Thyroid gland (tissue), 4 donors: ENCODE measurements at regions of chr7 and their contacts with region 1.

Region 1: DNA sequence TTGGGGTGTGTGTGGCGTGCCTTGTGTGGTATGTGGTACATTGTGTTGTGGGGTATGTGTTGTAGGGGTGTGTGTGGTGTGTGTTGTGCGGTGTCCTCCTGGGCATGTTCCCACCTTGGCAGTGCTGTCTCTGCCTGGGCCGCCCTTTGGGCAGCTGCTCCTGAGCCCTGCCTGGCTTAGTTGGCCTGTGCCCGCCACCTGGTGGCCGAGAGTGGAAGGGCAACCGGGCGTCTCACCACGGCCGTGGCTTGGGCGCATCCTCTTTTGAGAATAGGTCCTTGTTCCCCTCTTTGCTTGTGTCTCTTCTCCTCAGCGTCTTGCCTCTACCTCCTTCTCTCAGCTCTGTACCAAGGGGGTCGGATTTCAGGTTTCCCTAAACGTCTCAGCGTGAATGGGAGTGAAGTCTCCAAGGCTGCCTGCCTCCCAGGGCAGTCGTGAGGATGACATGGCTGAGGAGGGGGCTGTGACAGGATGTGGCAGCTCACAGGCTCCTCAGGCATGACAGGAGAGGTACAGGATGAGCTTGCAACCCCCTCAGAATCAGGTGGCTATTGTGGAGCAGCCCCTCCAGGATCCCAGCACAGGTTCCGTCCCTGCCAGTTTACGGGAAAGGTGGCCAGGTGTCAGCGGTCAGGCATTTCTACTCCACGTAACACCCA is 98.4 kb upstream of the PODXL start:
- DNase-seq: peak; percentile 84 to 87
- H3K4me3 ChIP-seq: no peak overlapping the region
- H3K27ac ChIP-seq: no peak overlapping the region
- H3K4me1 ChIP-seq: no peaks in the 10 kb centered on the region
- H3K27me3 ChIP-seq: no peaks in the 10 kb centered on the region
- CTCF ChIP-seq: peak; percentile 84 to 95 (median 92)
- POLR2A ChIP-seq: no peak

Region 2: GRCh38 chr7:131507592-131508331 is 147.0 kb before region 1 on chr7:
- intact Hi-C with region 1: loop called (anchors 2 kb)
- DNase-seq: peak; percentile 82 to 87
- H3K4me3 ChIP-seq: no peak overlapping the region
- H3K27ac ChIP-seq: peak overlapping the region in 1 of 3 donors; percentile 45
- H3K4me1 ChIP-seq: peaks cover 3 to 17% of the 10 kb centered on the region in 2 donors
- H3K27me3 ChIP-seq: no peaks in the 10 kb centered on the region
- CTCF ChIP-seq: peak; percentile 77 to 95 (median 86)
- POLR2A ChIP-seq: no peak

Region 3: GRCh38 chr7:131899271-131900030 is 244.7 kb after region 1 on chr7:
- intact Hi-C with region 1: no loop called
- DNase-seq: no peak
- H3K4me3 ChIP-seq: no peak overlapping the region
- H3K27ac ChIP-seq: no peak overlapping the region
- H3K4me1 ChIP-seq: no peaks in the 10 kb centered on the region
- H3K27me3 ChIP-seq: no peaks in the 10 kb centered on the region
- CTCF ChIP-seq: no peak
- POLR2A ChIP-seq: no peak